Activated T-helper 1 cell treated with anti-CD3 and anti-CD28 coated beads, Interleukin-12 subunit alpha, Interleukin-12 subunit beta, Interleukin-2, Interleukin-4 antibody, amounts not matched to agents 30 ng/mL and 10 ng/mL and 1 ng/mL, durations not matched to agents 14 hours and 24 hours and 36 hours (primary cell): ENCODE measurements at regions of chr15 and their contacts with region 1.

Region 1: DNA sequence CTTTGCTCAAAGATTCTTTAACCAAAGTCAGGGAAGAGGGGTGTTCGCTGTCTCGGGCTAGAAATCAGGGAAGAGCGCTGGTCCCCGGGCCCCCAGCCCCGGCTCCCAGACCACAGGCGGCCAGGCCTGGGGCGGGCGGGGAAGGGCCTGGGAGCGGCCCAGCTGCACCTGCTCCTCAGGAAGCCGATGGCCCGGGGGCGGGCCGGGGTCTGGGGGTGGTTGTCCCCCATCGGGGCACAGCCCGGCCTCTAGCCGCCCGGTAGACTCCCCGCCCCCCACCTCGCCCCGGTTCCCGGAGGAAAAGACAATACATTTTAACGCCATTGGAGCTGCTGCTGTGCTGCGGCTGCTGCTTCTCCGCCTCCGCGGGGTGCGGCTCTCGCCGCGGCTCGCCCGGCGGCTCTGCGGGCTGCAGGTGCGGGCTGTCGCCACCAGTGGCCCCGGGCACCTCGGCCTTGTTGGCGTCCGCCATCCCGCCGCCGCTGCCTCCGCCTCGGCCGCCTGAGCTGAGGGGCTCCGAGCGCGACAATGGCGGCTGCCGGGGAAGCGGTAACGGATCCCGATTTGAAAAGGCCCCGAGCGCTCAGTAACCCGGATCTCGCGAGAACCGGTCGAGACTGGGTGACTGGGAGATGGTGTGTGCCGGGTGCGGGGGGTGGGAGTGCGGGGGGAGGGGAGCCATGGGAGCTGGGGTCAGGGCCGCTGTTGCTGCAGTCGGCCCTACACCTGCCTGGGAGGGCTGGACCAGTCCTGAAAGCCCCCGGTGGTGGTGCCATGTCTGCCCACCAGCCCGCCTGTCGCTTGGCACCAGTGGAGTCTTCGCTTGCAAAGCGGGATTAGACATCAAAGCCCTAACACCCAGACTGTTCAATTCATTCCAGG is at the start of gene MYEF2:
- DNase-seq: peak; percentile 70
- H3K4me3 Mint-ChIP-seq: peak within 1 kb of the TSS; percentile 90
- H3K27ac Mint-ChIP-seq: peak within 1 kb of the TSS; percentile 90
- H3K4me1 Mint-ChIP-seq: peaks cover 19% of the 10 kb centered on the region
- H3K27me3 Mint-ChIP-seq: peaks cover 25% of the 10 kb centered on the region
- total RNA-seq, gene MYEF2: 20.3 and 21.1 TPM in 2 replicates

Region 2: GRCh38 chr15:48119277-48119676 is 58.7 kb before region 1 on chr15:
- intact Hi-C with region 1: no loop called
- DNase-seq: no peak
- H3K4me3 Mint-ChIP-seq: no peak overlapping the region
- H3K27ac Mint-ChIP-seq: no peak overlapping the region
- H3K4me1 Mint-ChIP-seq: no peaks in the 10 kb centered on the region
- H3K27me3 Mint-ChIP-seq: peaks cover 10% of the 10 kb centered on the region

Region 3: GRCh38 chr15:48190932-48191573 is 13.0 kb after region 1 on chr15:
- intact Hi-C with region 1: loop called (anchors 1 kb)
- DNase-seq: peak; percentile 28
- H3K4me3 Mint-ChIP-seq: no peak overlapping the region
- H3K27ac Mint-ChIP-seq: no peak overlapping the region
- H3K4me1 Mint-ChIP-seq: peaks cover 8% of the 10 kb centered on the region
- H3K27me3 Mint-ChIP-seq: peaks cover 19% of the 10 kb centered on the region

Region 4: GRCh38 chr15:49793943-49794342 is 1615.9 kb after region 1 on chr15:
- intact Hi-C with region 1: no loop called
- DNase-seq: no peak
- H3K4me3 Mint-ChIP-seq: no peak overlapping the region
- H3K27ac Mint-ChIP-seq: no peak overlapping the region
- H3K4me1 Mint-ChIP-seq: no peaks in the 10 kb centered on the region
- H3K27me3 Mint-ChIP-seq: no peaks in the 10 kb centered on the region